ENCODE measurements at regions of chr6 and their contacts with region 1.

Region 1: DNA sequence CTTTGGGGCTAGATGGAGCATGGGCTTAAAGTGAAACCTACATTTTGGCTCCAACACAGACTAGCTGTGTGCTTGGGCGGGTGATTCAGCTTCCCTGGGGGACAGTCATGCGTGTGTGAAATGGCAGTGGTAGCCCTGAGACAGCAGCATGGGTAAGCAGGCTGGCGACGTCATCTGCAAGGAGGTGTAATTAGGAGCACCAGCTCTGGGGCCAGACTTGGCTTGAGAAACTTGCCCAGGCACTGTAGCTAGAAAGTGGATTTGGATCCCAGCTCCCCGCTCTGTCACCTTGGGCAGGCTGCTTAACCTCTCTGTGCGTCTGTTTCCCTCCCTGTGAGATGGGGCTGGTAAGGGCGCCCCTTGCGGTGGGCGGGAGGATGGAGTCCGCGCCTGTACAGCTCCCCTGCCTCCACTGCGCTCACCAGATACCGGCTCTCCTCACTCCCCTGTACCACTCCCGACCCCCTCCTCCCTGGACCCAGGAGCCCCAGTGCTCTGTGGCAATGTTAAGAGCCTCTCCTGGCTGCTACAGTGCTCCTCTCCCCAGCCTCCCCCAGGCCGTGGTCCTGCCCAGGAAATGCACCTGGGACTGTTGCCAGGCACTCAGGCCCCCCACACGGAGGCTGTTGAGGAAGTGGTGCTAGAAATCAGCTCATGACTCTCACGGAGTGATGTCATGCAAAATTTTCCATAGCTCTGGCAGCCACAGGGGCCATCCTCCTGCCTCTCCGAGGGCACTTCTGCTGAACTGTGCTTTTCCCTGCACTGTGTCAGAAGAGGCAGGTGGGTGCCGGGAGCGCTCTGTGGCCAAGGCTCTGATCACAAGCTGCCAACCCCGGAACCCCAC is 44.6 kb downstream of the SYNJ2 start:
- DNase-seq: peak; percentile 90
- H3K4me3 Mint-ChIP-seq: peak overlapping the region; percentile 77
- H3K27ac Mint-ChIP-seq: peak overlapping the region; percentile 98
- H3K4me1 Mint-ChIP-seq: peaks cover 29% of the 10 kb centered on the region
- H3K27me3 Mint-ChIP-seq: no peaks in the 10 kb centered on the region

Region 2: GRCh38 chr6:157428427-157429202 is 597.7 kb before region 1 on chr6:
- CTCF ChIA-PET with region 1: no interaction called
- POLR2A ChIA-PET with region 1: no interaction called
- intact Hi-C with region 1: loop called (anchors 1 kb)
- DNase-seq: peak; percentile 88
- H3K4me3 Mint-ChIP-seq: no peak overlapping the region
- H3K27ac Mint-ChIP-seq: peak overlapping the region; percentile 74
- H3K4me1 Mint-ChIP-seq: peaks cover 37% of the 10 kb centered on the region
- H3K27me3 Mint-ChIP-seq: peaks cover 10% of the 10 kb centered on the region

Region 3: GRCh38 chr6:157941101-157941863 is 85.0 kb before region 1 on chr6:
- CTCF ChIA-PET with region 1: interaction called, 14 read pairs
- POLR2A ChIA-PET with region 1: interaction called, 4 read pairs
- intact Hi-C with region 1: loop called (anchors 1 kb)
- DNase-seq: no peak
- H3K4me3 Mint-ChIP-seq: no peak overlapping the region
- H3K27ac Mint-ChIP-seq: peak overlapping the region; percentile 70
- H3K4me1 Mint-ChIP-seq: peaks cover 42% of the 10 kb centered on the region
- H3K27me3 Mint-ChIP-seq: no peaks in the 10 kb centered on the region

Region 4: GRCh38 chr6:158002951-158003853 is 23.1 kb before region 1 on chr6:
- CTCF ChIA-PET with region 1: interaction called, 20 read pairs
- POLR2A ChIA-PET with region 1: interaction called, 6 read pairs
- intact Hi-C with region 1: loop called (anchors 2 kb)
- DNase-seq: peak; percentile 80
- H3K4me3 Mint-ChIP-seq: no peak overlapping the region
- H3K27ac Mint-ChIP-seq: peak overlapping the region; percentile 44
- H3K4me1 Mint-ChIP-seq: peaks cover 44% of the 10 kb centered on the region
- H3K27me3 Mint-ChIP-seq: no peaks in the 10 kb centered on the region

Region 5: GRCh38 chr6:158038291-158039177 is 12.3 kb after region 1 on chr6:
- CTCF ChIA-PET with region 1: interaction called, 20 read pairs
- POLR2A ChIA-PET with region 1: interaction called, 3 read pairs
- intact Hi-C with region 1: no loop called
- DNase-seq: no peak
- H3K4me3 Mint-ChIP-seq: no peak overlapping the region
- H3K27ac Mint-ChIP-seq: no peak overlapping the region
- H3K4me1 Mint-ChIP-seq: peaks cover 25% of the 10 kb centered on the region
- H3K27me3 Mint-ChIP-seq: no peaks in the 10 kb centered on the region

Region 6: GRCh38 chr6:158072083-158072721 is 45.9 kb after region 1 on chr6:
- CTCF ChIA-PET with region 1: interaction called, 27 read pairs
- POLR2A ChIA-PET with region 1: interaction called, 3 read pairs
- intact Hi-C with region 1: loop called (anchors 1 kb)
- DNase-seq: peak; percentile 80
- H3K4me3 Mint-ChIP-seq: no peak overlapping the region
- H3K27ac Mint-ChIP-seq: peak overlapping the region; percentile 64
- H3K4me1 Mint-ChIP-seq: peaks cover 23% of the 10 kb centered on the region
- H3K27me3 Mint-ChIP-seq: no peaks in the 10 kb centered on the region

Measured in activated CD4-positive, alpha-beta memory T cell treated with anti-CD3 and anti-CD28 coated beads for 36 hours (primary cell).